Panc1 (cell line): ENCODE measurements at regions of chr16 and their contacts with region 1.

Region 1: GRCh38 chr16:48353565-48354163 is 31.5 kb downstream of the SIAH1 start:
- DNase-seq: peak; percentile 24
- ATAC-seq: peak; percentile 91
- H3K4me3 ChIP-seq: no peak overlapping the region
- H3K27ac ChIP-seq: no peak overlapping the region
- H3K4me1 ChIP-seq: no peaks in the 10 kb centered on the region; the same call in 1 of the 2 replicates
- H3K27me3 ChIP-seq: no peaks in the 10 kb centered on the region
- CTCF ChIP-seq: peak; percentile 81

Region 2: GRCh38 chr16:48064971-48065370 is 288.7 kb before region 1 on chr16:
- CTCF ChIA-PET with region 1: no interaction called
- POLR2A ChIA-PET with region 1: no interaction called
- in situ Hi-C with region 1: no loop called
- intact Hi-C with region 1: no loop called
- DNase-seq: no peak
- ATAC-seq: no peak
- H3K4me3 ChIP-seq: no peak overlapping the region
- H3K27ac ChIP-seq: no peak overlapping the region
- H3K4me1 ChIP-seq: no peaks in the 10 kb centered on the region
- H3K27me3 ChIP-seq: no peaks in the 10 kb centered on the region
- CTCF ChIP-seq: no peak

Region 3: GRCh38 chr16:48136547-48137360 is 216.9 kb before region 1 on chr16:
- CTCF ChIA-PET with region 1: no interaction called
- POLR2A ChIA-PET with region 1: no interaction called
- in situ Hi-C with region 1: no loop called
- intact Hi-C with region 1: no loop called
- DNase-seq: no peak
- ATAC-seq: no peak
- H3K4me3 ChIP-seq: no peak overlapping the region
- H3K27ac ChIP-seq: no peak overlapping the region
- H3K4me1 ChIP-seq: no peaks in the 10 kb centered on the region
- H3K27me3 ChIP-seq: no peaks in the 10 kb centered on the region
- CTCF ChIP-seq: no peak

Region 4: DNA sequence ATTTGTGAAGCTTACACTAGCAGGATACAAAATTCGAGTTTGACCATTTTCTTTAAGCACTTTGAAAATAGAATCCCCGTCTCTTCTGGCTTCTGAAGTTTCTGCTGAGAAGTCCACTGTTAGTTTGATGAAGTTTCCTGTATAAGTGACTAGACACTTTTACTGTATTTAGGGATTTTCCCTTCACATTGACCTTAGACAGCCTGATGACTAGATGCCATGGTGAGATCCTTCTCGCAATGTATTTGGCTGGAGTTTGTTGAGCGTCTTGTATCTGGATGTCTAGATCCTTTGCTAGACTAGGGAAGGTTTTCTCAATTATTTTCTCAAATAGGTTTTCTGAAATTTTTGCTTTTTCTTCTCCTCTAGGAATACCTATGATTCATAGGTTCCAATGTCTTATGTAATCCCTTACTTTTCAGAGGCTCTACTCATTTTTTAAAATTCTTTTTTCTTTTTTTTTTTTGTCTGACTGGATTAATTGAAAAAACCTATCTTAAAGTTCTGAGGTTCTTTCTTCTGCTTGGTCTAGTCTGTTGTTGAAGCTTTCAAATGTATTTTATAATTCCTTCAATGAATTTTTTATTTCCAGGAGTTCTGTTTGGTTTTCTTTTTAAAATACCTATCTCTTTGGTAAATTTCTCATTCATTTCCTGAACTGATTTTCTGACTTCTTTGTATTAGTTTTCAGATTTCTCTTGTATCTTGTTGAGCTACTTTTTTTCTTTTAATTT is 42.6 kb before region 1 on chr16:
- CTCF ChIA-PET with region 1: no interaction called
- POLR2A ChIA-PET with region 1: no interaction called
- in situ Hi-C with region 1: no loop called
- intact Hi-C with region 1: no loop called
- DNase-seq: no peak
- ATAC-seq: no peak
- H3K4me3 ChIP-seq: no peak overlapping the region
- H3K27ac ChIP-seq: no peak overlapping the region
- H3K4me1 ChIP-seq: no peaks in the 10 kb centered on the region
- H3K27me3 ChIP-seq: no peaks in the 10 kb centered on the region
- CTCF ChIP-seq: no peak

Region 5: GRCh38 chr16:48330841-48331192 is 22.8 kb before region 1 on chr16:
- CTCF ChIA-PET with region 1: no interaction called
- POLR2A ChIA-PET with region 1: interaction called, 13 read pairs
- in situ Hi-C with region 1: no loop called
- intact Hi-C with region 1: no loop called
- DNase-seq: no peak
- ATAC-seq: no peak
- H3K4me3 ChIP-seq: no peak overlapping the region
- H3K27ac ChIP-seq: no peak overlapping the region
- H3K4me1 ChIP-seq: no peaks in the 10 kb centered on the region
- H3K27me3 ChIP-seq: no peaks in the 10 kb centered on the region
- CTCF ChIP-seq: no peak

Region 6: DNA sequence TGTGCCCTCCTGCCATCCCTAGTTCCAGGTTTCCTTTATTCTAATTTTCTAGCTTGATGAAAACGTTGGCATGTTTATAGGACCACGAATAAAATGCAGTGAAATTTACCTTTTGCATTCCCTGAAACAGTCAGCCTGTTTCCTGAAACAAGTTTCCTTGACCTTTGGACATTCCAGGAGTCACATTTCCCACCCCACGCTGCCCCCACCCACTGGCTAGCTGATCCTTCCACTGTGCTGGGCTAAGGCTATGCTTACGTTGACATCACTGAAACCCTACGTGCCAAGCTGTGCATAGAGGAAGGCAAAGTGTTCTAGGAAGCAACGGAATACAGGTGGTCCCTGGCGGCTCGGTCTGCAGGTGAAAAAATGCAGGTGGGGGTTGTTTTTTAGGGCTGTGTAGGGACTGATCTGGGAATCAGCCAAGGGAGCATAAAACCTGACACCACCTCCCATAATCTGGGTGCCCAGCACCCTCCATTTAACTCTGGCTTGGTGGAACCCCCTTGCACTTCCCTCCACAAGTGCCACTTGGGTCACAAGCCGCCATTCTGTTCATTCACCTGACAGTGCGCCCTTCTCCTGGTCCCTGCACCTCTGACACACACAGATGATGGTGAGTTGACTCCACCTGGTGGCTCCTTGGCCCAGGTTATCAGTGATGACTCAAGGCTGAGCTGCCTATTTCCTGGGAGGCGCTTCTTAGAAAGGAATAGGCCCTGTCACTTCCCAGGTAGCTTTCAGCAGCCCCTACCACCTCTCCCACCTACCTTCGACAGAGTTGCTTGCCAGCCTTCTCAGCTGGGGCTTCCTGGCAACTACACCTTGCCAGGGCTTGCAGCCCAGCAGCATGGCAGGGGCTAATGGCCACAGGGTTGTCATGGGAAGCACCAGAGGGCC is 172.6 kb after region 1 on chr16:
- CTCF ChIA-PET with region 1: no interaction called
- POLR2A ChIA-PET with region 1: no interaction called
- in situ Hi-C with region 1: no loop called
- intact Hi-C with region 1: loop called (anchors 10 kb)
- DNase-seq: peak; percentile 32
- ATAC-seq: peak; percentile 80; the same call in 1 of the 2 replicates
- H3K4me3 ChIP-seq: no peak overlapping the region
- H3K27ac ChIP-seq: no peak overlapping the region
- H3K4me1 ChIP-seq: no peaks in the 10 kb centered on the region
- H3K27me3 ChIP-seq: no peaks in the 10 kb centered on the region
- CTCF ChIP-seq: no peak

Region 7: DNA sequence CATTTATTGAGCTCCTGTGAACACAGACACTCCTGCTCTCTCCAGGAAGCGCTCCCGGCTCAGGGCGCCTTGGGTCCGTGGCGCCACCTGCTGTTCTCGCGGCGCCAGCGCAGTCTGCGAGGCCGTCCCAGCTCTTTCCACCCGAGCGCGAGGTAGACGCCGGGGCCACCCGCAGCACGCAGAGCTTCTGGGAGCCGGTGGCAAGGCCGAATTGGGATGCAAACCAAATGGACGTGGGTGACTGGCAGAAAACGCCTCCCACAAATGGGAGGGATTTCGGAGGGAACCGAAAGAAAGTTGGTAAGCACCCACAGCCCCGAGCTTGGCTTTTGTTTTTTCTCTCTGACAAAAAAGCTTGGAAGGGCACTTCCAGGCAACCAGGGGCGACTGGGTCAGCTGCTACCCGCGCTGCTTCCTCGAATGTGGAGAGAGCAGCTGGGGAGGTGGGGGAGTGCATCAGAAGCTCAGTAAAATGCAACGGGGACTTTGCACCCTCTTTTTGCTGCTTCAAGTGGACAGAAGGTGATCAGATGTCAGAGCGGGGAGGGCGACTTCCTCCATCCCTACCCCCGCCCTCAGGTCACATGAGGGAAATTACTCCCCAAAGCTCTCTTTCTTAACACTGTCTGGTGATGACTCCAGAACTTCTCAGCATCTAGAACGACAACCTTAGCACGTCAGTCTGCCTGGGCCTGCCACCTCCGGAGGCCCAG is 269.8 kb after region 1 on chr16:
- CTCF ChIA-PET with region 1: interaction called, 10 read pairs
- POLR2A ChIA-PET with region 1: no interaction called
- in situ Hi-C with region 1: no loop called
- intact Hi-C with region 1: no loop called
- DNase-seq: peak; percentile 41
- ATAC-seq: peak; percentile 100
- H3K4me3 ChIP-seq: peak overlapping the region; percentile 32 to 42
- H3K27ac ChIP-seq: no peak overlapping the region
- H3K4me1 ChIP-seq: no peaks in the 10 kb centered on the region
- H3K27me3 ChIP-seq: no peaks in the 10 kb centered on the region
- CTCF ChIP-seq: peak; percentile 96